CD4-positive, alpha-beta memory T cell (primary cell): ENCODE measurements at regions of chr1 and their contacts with region 1.

Region 1: DNA sequence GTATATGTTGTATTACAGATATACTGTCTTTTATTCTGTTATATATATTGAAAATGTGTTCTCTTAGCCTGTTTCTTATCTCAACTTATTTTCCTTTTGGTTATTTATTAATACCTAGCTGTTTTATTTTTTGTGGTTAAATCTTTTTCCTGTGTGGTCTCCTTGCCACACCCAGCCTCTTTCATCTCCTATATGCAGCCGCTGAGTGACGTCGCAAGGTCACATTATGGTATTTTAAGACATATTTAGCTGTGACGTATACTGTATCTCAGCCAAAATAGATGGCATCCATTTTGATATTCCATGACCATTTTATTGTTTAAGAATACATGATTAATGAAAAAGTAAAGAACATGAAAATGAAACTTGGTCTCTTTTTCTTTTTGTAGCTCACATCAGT is 29.1 kb downstream of the CENPF start:
- DNase-seq: peak; percentile 65 to 80 (median 74)
- H3K4me3 ChIP-seq: peak overlapping the region in 1 of 2 donors; percentile 43
- H3K4me3 Mint-ChIP-seq: peak overlapping the region; percentile 33 to 75 (median 60)
- H3K27ac ChIP-seq: no peak overlapping the region
- H3K27ac Mint-ChIP-seq: peak overlapping the region; percentile 75 to 97 (median 94)
- H3K4me1 ChIP-seq: peaks cover 27% of the 10 kb centered on the region
- H3K4me1 Mint-ChIP-seq: peaks cover 11 to 34% (median 24%) of the 10 kb centered on the region in 4 donors
- H3K27me3 ChIP-seq: no peaks in the 10 kb centered on the region
- H3K27me3 Mint-ChIP-seq: no peaks in the 10 kb centered on the region

Region 2: DNA sequence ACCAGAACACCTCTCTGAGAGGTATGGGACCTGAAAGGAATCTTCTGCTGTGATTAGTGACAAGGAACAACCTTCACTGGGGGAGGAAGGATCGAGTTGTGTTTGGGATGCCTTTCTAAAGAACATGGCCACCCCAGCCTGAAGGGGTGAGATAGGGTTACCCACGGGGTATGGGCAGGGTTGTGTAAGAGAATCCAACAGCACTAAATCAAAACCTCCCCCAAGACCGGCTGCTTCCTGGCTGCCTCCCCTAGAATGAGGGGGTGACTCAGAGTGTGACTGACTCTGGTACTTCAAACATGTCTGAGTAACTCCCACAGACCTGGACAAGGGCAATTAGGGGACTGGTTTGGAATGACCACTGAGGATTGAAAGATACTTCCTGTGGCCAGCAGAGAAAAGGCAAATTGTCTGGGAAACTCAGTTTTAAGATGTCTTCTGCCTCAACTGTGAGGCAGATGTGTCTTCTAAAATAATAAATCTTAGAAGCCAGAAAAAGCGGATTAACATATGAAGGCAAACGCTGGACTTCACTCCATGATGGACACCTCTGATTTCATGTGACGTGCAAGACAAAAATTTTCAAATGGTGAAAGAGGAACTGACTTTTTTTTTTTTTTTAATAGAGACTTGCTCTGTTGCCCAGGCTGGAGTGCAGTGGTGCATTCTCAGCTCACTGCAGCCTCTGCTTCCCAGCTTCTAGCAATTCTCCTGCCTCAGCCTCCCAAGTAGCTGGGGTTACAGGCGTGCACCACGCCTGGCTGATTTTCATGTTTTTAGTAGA is 73.9 kb before region 1 on chr1:
- CTCF ChIA-PET with region 1: no interaction called
- POLR2A ChIA-PET with region 1: no interaction called
- intact Hi-C with region 1: no loop called
- DNase-seq: no peak
- H3K4me3 ChIP-seq: no peak overlapping the region
- H3K4me3 Mint-ChIP-seq: no peak overlapping the region
- H3K27ac ChIP-seq: no peak overlapping the region
- H3K27ac Mint-ChIP-seq: peak overlapping the region in 1 of 7 donors; percentile 18
- H3K4me1 ChIP-seq: no peaks in the 10 kb centered on the region
- H3K4me1 Mint-ChIP-seq: no peaks in the 10 kb centered on the region
- H3K27me3 ChIP-seq: no peaks in the 10 kb centered on the region
- H3K27me3 Mint-ChIP-seq: peaks cover 21 to 31% of the 10 kb centered on the region in 2 donors

Region 3: GRCh38 chr1:214602764-214603657 is 29.1 kb before region 1 on chr1 and contains the start of gene CENPF:
- CTCF ChIA-PET with region 1: interaction called, 8 read pairs
- POLR2A ChIA-PET with region 1: no interaction called
- intact Hi-C with region 1: loop called (anchors 2 kb)
- DNase-seq: peak; percentile 93 to 96 (median 95)
- H3K4me3 ChIP-seq: peak within 1 kb of the TSS; percentile 43 to 59
- H3K4me3 Mint-ChIP-seq: peak within 1 kb of the TSS; percentile 88 to 98 (median 96)
- H3K27ac ChIP-seq: no peak within 1 kb of the TSS
- H3K27ac Mint-ChIP-seq: peak within 1 kb of the TSS; percentile 69 to 94 (median 90)
- H3K4me1 ChIP-seq: peaks cover 7% of the 10 kb centered on the region
- H3K4me1 Mint-ChIP-seq: peaks cover 9 to 25% (median 16%) of the 10 kb centered on the region in 4 donors
- H3K27me3 ChIP-seq: no peaks in the 10 kb centered on the region
- H3K27me3 Mint-ChIP-seq: no peaks in the 10 kb centered on the region
- total RNA-seq, gene CENPF: 2.2 to 2.8 TPM

Region 4: GRCh38 chr1:214660862-214661261 is 28.8 kb after region 1 on chr1:
- CTCF ChIA-PET with region 1: interaction called, 13 read pairs
- POLR2A ChIA-PET with region 1: no interaction called
- intact Hi-C with region 1: no loop called
- DNase-seq: no peak
- H3K4me3 ChIP-seq: no peak overlapping the region
- H3K4me3 Mint-ChIP-seq: no peak overlapping the region
- H3K27ac ChIP-seq: no peak overlapping the region
- H3K27ac Mint-ChIP-seq: no peak overlapping the region
- H3K4me1 ChIP-seq: no peaks in the 10 kb centered on the region
- H3K4me1 Mint-ChIP-seq: no peaks in the 10 kb centered on the region
- H3K27me3 ChIP-seq: no peaks in the 10 kb centered on the region
- H3K27me3 Mint-ChIP-seq: no peaks in the 10 kb centered on the region

Region 5: DNA sequence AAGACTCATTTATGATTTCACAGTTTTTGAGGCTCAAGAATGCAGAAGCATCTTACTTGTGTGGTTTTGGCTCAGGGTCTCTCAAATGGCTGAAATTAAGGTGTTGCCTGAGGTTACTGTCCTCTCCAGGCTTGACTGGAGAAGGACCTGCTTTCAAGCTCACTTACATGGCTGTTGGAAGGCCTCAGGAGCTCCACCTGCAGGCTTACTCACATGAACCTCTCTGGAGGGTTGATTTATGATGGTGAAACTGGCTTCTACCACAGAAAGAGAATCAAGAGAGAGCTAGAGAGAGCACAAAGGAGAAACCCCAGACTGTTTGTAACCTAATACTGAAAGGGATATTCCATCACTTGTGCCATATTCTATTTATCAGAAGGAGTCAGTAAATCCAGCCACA is 444.2 kb after region 1 on chr1:
- CTCF ChIA-PET with region 1: no interaction called
- POLR2A ChIA-PET with region 1: no interaction called
- intact Hi-C with region 1: loop called (anchors 1 kb)
- DNase-seq: no peak
- H3K4me3 ChIP-seq: no peak overlapping the region
- H3K4me3 Mint-ChIP-seq: no peak overlapping the region
- H3K27ac ChIP-seq: no peak overlapping the region
- H3K27ac Mint-ChIP-seq: no peak overlapping the region
- H3K4me1 ChIP-seq: no peaks in the 10 kb centered on the region
- H3K4me1 Mint-ChIP-seq: peaks cover 0 to 3% (median under 1%) of the 10 kb centered on the region in 4 donors
- H3K27me3 ChIP-seq: no peaks in the 10 kb centered on the region
- H3K27me3 Mint-ChIP-seq: peaks cover 9 to 10% of the 10 kb centered on the region in 2 donors

Region 6: GRCh38 chr1:215526553-215527151 is 894.6 kb after region 1 on chr1:
- CTCF ChIA-PET with region 1: interaction called, 7 read pairs
- POLR2A ChIA-PET with region 1: no interaction called
- intact Hi-C with region 1: loop called (anchors 1 kb)
- DNase-seq: peak in 4 of 5 donors; percentile 23 to 33 (median 32)
- H3K4me3 ChIP-seq: no peak overlapping the region
- H3K4me3 Mint-ChIP-seq: no peak overlapping the region
- H3K27ac ChIP-seq: no peak overlapping the region
- H3K27ac Mint-ChIP-seq: no peak overlapping the region
- H3K4me1 ChIP-seq: no peaks in the 10 kb centered on the region
- H3K4me1 Mint-ChIP-seq: peaks cover 0 to 1% (median 0%) of the 10 kb centered on the region in 4 donors
- H3K27me3 ChIP-seq: no peaks in the 10 kb centered on the region
- H3K27me3 Mint-ChIP-seq: peaks cover 0 to 1% of the 10 kb centered on the region in 2 donors

Region 7: DNA sequence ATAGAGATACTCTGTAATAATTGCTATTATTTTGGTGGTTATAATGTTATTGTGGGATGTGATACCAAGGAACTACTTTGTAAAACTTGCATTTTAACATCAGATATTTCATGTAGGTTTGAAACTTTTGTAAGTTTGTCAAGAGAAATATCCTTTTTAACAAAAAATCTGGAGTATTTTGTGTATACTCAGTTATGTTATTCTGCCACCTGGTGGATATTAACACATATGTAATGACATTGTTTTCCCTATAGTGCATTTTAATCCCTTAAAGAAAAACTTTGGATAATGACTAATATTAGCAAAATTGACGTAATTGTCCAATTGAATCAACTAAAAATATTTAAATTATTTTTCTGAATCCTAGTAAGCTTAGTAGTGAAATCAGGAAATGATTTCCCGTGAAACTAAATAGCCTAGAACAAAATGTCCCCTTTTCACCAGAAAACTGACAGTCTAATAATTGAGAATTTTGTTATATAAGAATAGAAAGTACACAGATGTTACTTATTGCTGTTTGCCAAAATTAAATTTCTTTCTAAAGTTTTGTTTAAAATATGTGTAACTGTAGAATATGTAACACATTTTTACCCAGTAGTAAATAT is 974.6 kb after region 1 on chr1:
- CTCF ChIA-PET with region 1: no interaction called
- POLR2A ChIA-PET with region 1: no interaction called
- intact Hi-C with region 1: loop called (anchors 1 kb)
- DNase-seq: no peak
- H3K4me3 ChIP-seq: no peak overlapping the region
- H3K4me3 Mint-ChIP-seq: no peak overlapping the region
- H3K27ac ChIP-seq: no peak overlapping the region
- H3K27ac Mint-ChIP-seq: no peak overlapping the region
- H3K4me1 ChIP-seq: no peaks in the 10 kb centered on the region
- H3K4me1 Mint-ChIP-seq: no peaks in the 10 kb centered on the region
- H3K27me3 ChIP-seq: no peaks in the 10 kb centered on the region
- H3K27me3 Mint-ChIP-seq: no peaks in the 10 kb centered on the region